Natural killer cell (primary cell): ENCODE measurements at regions of chr15 and their contacts with region 1.

Region 1: GRCh38 chr15:65638681-65639089 is 16.9 kb downstream of the SLC24A1 start:
- DNase-seq: peak in 1 of 2 donors; percentile 86
- ATAC-seq: peak; percentile 81 to 91 (median 89)
- H3K4me3 ChIP-seq: no peak overlapping the region
- H3K4me3 Mint-ChIP-seq: no peak overlapping the region
- H3K27ac ChIP-seq: no peak overlapping the region
- H3K27ac Mint-ChIP-seq: no peak overlapping the region
- H3K4me1 ChIP-seq: no peaks in the 10 kb centered on the region
- H3K4me1 Mint-ChIP-seq: peaks cover 6 to 11% of the 10 kb centered on the region in 2 donors
- H3K27me3 ChIP-seq: no peaks in the 10 kb centered on the region
- H3K27me3 Mint-ChIP-seq: no peaks in the 10 kb centered on the region
- CTCF ChIP-seq: peak; percentile 83

Region 2: DNA sequence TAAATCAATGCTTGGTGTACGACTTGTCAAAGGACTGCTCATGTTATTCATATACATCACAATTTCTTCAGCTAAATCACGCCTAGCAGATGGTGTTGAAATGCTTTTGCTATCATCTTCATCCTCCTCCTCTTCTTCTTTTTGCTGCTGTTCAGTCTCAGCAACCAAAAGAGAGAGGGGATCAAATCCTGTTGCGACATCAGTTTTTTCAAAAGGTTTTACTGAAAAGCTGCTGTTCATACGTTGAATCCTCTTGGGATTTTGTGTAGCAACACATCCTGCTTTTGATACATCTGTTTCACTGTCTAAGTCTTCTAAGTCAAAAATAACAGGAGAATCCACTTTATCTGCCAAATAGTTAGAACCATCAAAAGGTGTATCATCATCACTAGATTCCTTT is 52.1 kb after region 1 on chr15:
- intact Hi-C with region 1: no loop called
- DNase-seq: no peak
- ATAC-seq: no peak
- H3K4me3 ChIP-seq: no peak overlapping the region
- H3K4me3 Mint-ChIP-seq: no peak overlapping the region
- H3K27ac ChIP-seq: no peak overlapping the region
- H3K27ac Mint-ChIP-seq: no peak overlapping the region
- H3K4me1 ChIP-seq: no peaks in the 10 kb centered on the region
- H3K4me1 Mint-ChIP-seq: no peaks in the 10 kb centered on the region
- H3K27me3 ChIP-seq: no peaks in the 10 kb centered on the region
- H3K27me3 Mint-ChIP-seq: no peaks in the 10 kb centered on the region
- CTCF ChIP-seq: no peak

Region 3: DNA sequence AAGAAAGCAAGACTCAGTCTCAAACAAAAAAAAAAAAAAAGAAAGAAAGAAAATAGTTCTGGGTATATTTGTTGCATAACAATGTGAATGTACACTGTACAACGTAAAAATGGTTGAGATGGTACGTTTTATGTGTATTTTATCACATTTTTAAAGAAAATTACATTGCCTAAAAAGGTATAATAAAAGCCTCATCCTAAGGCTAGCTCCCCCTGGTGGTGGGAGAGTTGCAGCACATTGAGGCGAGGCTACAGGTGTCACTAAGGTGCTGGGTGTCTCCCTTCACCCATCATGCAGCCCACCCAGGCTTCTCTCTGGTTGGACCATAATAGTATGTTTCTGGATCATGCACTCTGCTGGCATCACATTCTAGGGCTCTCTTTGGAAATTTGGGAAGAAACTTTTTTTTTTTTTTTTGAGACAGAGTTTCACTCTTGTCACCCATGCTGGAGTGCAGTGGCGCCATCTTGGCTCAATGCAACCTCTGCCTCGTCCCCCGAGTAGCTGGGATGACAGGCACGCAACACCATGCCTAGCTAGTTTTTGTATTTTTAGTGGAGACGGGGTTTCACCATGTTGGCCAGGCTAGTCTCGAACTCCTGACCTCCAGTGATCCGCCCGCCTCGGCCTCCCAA is 218.3 kb after region 1 on chr15:
- intact Hi-C with region 1: loop called (anchors 1 kb)
- DNase-seq: peak; percentile 55 to 93
- ATAC-seq: peak; percentile 37 to 71 (median 70)
- H3K4me3 ChIP-seq: no peak overlapping the region
- H3K4me3 Mint-ChIP-seq: no peak overlapping the region
- H3K27ac ChIP-seq: no peak overlapping the region
- H3K27ac Mint-ChIP-seq: peak overlapping the region in 1 of 2 donors; percentile 32
- H3K4me1 ChIP-seq: peaks cover 7% of the 10 kb centered on the region
- H3K4me1 Mint-ChIP-seq: peaks cover 19 to 24% of the 10 kb centered on the region in 2 donors
- H3K27me3 ChIP-seq: no peaks in the 10 kb centered on the region
- H3K27me3 Mint-ChIP-seq: no peaks in the 10 kb centered on the region
- CTCF ChIP-seq: peak; percentile 86

Region 4: DNA sequence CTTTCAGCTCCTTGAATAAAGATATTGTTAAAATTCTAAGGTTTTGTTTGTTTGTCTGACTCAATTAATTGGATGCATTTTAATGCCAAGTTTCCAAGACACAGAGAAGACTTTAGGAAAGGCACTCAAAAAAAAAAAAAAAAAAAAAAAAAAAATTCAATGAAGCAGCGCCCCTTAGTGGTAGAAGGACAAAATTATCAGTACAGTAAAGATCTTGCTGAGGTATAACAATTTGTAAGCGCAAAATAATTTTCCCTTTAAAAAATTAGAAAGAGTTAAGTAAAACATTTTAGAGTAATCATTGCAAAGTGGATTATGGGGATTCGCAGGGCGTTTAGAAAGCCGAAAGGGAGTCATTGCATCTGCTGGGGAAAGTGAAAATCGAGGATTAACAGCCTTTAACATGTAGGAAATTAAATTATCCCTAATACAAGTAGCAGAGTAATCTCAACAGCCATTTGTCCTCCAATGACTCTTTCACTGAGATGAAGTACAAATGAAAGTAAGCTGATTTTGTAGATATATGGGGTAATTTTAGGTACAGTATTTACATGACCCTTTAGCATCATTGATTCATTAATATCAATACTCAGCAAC is 648.9 kb after region 1 on chr15:
- intact Hi-C with region 1: loop called (anchors 2 kb)
- DNase-seq: peak in 1 of 2 donors; percentile 67
- ATAC-seq: peak in 1 of 3 donors; percentile 40
- H3K4me3 ChIP-seq: no peak overlapping the region
- H3K4me3 Mint-ChIP-seq: no peak overlapping the region
- H3K27ac ChIP-seq: no peak overlapping the region
- H3K27ac Mint-ChIP-seq: no peak overlapping the region
- H3K4me1 ChIP-seq: peaks cover 11% of the 10 kb centered on the region
- H3K4me1 Mint-ChIP-seq: peaks cover 14 to 16% of the 10 kb centered on the region in 2 donors
- H3K27me3 ChIP-seq: no peaks in the 10 kb centered on the region
- H3K27me3 Mint-ChIP-seq: no peaks in the 10 kb centered on the region
- CTCF ChIP-seq: peak; percentile 83